HepG2 (cell line): ENCODE measurements at regions of chr16 and their contacts with region 1.

Region 1: DNA sequence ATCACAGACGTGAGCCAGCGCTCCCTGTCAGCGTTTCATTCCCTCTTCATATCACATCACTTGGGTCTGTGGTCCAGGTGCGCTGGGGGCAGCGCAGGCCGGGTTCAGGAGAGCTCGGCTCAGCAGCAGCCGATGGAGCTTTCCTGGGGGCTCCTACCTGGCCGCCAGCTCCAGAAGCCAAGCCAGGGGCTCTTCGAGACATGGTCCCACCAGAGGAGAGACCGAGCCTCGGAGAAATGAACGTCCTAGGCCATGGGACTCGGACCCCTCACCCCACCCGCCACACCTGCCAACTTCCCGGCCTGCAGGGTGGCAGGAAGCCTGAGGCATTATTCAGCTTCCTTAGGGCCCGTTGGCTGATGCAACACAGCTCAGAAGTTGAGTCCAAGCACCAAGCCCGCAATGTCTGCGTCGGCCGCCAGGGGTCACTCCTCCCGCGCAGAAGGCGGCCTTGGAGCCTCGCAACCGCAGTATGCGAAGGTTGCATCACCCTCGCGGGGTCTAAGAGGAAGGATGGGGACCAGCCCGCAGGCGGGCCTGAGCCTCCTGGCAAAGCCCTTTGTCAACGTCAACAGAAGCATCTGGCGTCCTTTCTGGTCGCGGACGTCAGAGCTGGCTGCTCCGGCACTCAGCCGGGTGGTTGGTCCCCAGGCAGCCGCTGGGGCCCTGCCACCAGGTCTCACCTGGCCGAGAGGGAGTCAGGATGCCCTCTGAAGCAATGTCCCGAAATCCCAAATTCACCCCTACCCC is 13.2 kb upstream of the KLHDC4 start:
- DNase-seq: peak; percentile 88
- ATAC-seq: peak; percentile 82
- H3K4me3 ChIP-seq: no peak overlapping the region
- H3K27ac ChIP-seq: peak overlapping the region; percentile 63
- H3K4me1 ChIP-seq: peaks cover 44% of the 10 kb centered on the region
- H3K27me3 ChIP-seq: no peaks in the 10 kb centered on the region
- CTCF ChIP-seq: peak; percentile 100
- EP300 ChIP-seq: peak; percentile 77 to 84
- POLR2A ChIP-seq: peak in 1 of 2 experiments; percentile 21; a peak in 1 of 4 replicates
- RAD21 ChIP-seq: peak; percentile 100

Region 2: GRCh38 chr16:87698241-87698640 is 80.8 kb before region 1 on chr16:
- CTCF ChIA-PET with region 1: no interaction called
- POLR2A ChIA-PET with region 1: no interaction called
- in situ Hi-C with region 1: no loop called
- intact Hi-C with region 1: no loop called
- DNase-seq: no peak
- ATAC-seq: no peak
- H3K4me3 ChIP-seq: no peak overlapping the region
- H3K27ac ChIP-seq: no peak overlapping the region
- H3K4me1 ChIP-seq: no peaks in the 10 kb centered on the region
- H3K27me3 ChIP-seq: no peaks in the 10 kb centered on the region; a peak in 1 of 5 replicates
- CTCF ChIP-seq: no peak
- EP300 ChIP-seq: no peak
- POLR2A ChIP-seq: no peak
- RAD21 ChIP-seq: no peak

Region 3: DNA sequence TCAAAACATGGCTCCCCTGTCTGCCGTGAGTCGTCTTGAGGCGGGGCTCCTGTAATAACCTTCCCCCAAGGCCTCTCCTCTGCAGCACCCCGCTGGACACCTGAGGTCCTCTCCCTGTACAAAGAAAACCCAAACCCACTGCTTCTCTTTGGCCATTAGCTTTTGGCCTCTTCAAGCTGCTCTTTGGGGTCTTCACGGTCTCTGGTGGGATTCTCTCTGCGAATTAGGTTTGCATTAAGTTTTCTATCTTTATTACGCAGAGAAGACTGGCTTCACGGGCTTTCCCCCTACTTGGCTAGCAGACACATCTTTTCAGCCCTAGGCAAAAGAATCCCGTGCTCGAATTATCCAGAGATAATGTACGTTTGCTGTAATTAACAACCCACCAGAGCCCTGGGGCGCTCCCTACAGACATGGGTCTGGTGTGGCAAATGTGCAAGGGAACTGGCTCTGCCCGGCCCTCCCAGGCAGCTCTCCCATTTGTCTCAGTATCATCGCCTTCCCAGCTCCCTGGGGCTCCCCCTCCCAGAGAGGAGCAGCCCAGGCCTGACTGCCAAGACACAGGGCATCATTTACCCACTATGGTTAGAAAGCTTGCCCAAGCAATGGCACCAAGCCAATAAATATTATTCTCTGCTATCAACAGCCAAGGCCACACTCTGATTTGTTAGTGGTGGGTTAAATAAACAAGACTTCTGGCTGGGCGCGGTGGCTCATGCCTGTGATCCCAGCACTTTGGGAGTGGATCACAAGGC is 11.4 kb after region 1 on chr16:
- CTCF ChIA-PET with region 1: interaction called, 3 read pairs
- POLR2A ChIA-PET with region 1: interaction called, 63 read pairs
- in situ Hi-C with region 1: no loop called
- intact Hi-C with region 1: no loop called
- DNase-seq: no peak
- ATAC-seq: peak; percentile 8; the same call in 2 of the 3 replicates
- H3K4me3 ChIP-seq: peak overlapping the region in 1 of 3 experiments; percentile 64; a peak in 2 of 6 replicates
- H3K27ac ChIP-seq: peak overlapping the region; percentile 88
- H3K4me1 ChIP-seq: peaks cover 77% of the 10 kb centered on the region
- H3K27me3 ChIP-seq: no peaks in the 10 kb centered on the region
- CTCF ChIP-seq: no peak
- EP300 ChIP-seq: no peak
- POLR2A ChIP-seq: no peak
- RAD21 ChIP-seq: no peak

Region 4: DNA sequence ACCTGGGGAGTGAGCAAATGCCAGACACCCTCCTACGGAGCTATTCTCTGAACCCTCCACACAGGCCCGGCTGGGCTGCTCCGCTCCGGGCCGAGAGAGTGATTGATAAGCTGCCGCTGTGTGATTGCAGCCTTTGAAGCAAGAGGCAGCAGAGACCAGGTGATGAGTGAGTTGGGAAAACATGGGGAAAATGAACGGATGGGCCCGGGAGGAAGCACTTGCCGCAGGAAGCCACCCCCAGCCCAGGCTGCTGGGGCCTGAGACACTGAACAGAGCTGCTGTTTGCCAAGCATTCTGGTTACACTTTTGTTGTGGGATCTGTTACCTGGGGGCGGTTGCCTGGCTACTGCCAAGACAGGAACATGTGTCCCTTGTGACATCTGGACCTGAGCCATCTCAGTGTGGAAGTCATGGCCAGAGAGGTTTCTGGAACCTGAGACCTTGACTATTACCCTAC is 33.2 kb after region 1 on chr16:
- CTCF ChIA-PET with region 1: interaction called, 3 read pairs
- POLR2A ChIA-PET with region 1: interaction called, 53 read pairs
- in situ Hi-C with region 1: no loop called
- intact Hi-C with region 1: loop called (anchors 2 kb)
- DNase-seq: peak; percentile 68
- ATAC-seq: peak; percentile 70
- H3K4me3 ChIP-seq: peak overlapping the region in 1 of 3 experiments; percentile 41; a peak in 1 of 6 replicates
- H3K27ac ChIP-seq: no peak overlapping the region
- H3K4me1 ChIP-seq: peaks cover 72% of the 10 kb centered on the region
- H3K27me3 ChIP-seq: no peaks in the 10 kb centered on the region
- CTCF ChIP-seq: peak; percentile 68
- EP300 ChIP-seq: no peak
- POLR2A ChIP-seq: no peak
- RAD21 ChIP-seq: peak; percentile 73

Region 5: GRCh38 chr16:87847785-87848675 is 69.0 kb after region 1 on chr16:
- CTCF ChIA-PET with region 1: interaction called, 38 read pairs
- POLR2A ChIA-PET with region 1: interaction called, 44 read pairs
- in situ Hi-C with region 1: loop called (anchors 5 kb)
- intact Hi-C with region 1: loop called (anchors 2 kb)
- DNase-seq: peak; percentile 99
- ATAC-seq: peak; percentile 85
- H3K4me3 ChIP-seq: peak overlapping the region in 2 of 3 experiments; percentile 2 to 64; a peak in 2 of 6 replicates
- H3K27ac ChIP-seq: peak overlapping the region; percentile 98
- H3K4me1 ChIP-seq: peaks cover 99% of the 10 kb centered on the region
- H3K27me3 ChIP-seq: no peaks in the 10 kb centered on the region
- CTCF ChIP-seq: peak; percentile 65
- EP300 ChIP-seq: peak; percentile 86 to 89
- POLR2A ChIP-seq: peak in 1 of 2 experiments; percentile 74; a peak in 2 of 4 replicates
- RAD21 ChIP-seq: peak; percentile 64

Region 6: DNA sequence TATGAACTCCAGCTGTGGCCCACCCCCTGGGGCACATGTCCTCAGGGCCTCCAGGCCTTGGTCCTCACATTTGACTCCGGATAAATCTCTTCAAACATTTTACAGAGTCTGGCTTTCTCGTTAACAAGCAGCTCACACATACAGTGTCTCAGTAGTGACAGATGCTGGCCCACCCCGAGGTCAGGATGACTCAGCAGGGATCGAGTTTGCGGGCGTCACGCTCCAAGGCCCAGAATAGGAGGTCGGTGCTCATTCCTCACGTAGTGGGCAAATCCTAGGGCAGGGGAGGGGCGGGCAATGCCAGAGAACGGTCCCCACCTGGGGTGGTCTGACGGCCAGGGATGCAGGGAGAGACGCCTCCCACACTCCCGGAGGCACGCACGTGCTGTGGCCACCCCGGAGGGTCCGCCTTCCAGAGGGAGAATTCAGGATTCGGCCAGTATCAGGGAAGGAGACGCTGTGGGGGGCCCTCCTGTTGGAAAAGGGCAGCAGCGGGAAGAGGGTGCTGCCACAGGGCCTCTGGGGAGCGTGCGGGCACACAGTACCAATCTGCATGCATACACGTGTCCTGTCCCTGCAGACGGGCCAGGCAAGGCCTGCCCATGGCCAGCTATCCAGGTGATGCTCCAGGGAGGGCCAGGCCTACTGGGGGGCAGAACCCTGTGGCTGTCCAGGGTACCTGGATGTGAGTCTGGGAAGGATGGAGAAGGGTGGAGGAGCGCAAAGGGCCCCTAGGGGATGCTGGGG is 81.7 kb after region 1 on chr16:
- CTCF ChIA-PET with region 1: interaction called, 3 read pairs
- POLR2A ChIA-PET with region 1: interaction called, 11 read pairs
- in situ Hi-C with region 1: no loop called
- intact Hi-C with region 1: no loop called
- DNase-seq: peak; percentile 84
- ATAC-seq: peak; percentile 9
- H3K4me3 ChIP-seq: peak overlapping the region; percentile 6 to 66 (median 49); a peak in 5 of 6 replicates
- H3K27ac ChIP-seq: peak overlapping the region; percentile 98
- H3K4me1 ChIP-seq: peaks cover 97% of the 10 kb centered on the region
- H3K27me3 ChIP-seq: no peaks in the 10 kb centered on the region
- CTCF ChIP-seq: no peak
- EP300 ChIP-seq: peak in 1 of 2 experiments; percentile 40; a peak in 1 of 4 replicates
- POLR2A ChIP-seq: peak in 1 of 2 experiments; percentile 43; a peak in 3 of 4 replicates
- RAD21 ChIP-seq: 0 out of 2 replicates have a peak, but pooled peaks have one; percentile 7

Region 7: DNA sequence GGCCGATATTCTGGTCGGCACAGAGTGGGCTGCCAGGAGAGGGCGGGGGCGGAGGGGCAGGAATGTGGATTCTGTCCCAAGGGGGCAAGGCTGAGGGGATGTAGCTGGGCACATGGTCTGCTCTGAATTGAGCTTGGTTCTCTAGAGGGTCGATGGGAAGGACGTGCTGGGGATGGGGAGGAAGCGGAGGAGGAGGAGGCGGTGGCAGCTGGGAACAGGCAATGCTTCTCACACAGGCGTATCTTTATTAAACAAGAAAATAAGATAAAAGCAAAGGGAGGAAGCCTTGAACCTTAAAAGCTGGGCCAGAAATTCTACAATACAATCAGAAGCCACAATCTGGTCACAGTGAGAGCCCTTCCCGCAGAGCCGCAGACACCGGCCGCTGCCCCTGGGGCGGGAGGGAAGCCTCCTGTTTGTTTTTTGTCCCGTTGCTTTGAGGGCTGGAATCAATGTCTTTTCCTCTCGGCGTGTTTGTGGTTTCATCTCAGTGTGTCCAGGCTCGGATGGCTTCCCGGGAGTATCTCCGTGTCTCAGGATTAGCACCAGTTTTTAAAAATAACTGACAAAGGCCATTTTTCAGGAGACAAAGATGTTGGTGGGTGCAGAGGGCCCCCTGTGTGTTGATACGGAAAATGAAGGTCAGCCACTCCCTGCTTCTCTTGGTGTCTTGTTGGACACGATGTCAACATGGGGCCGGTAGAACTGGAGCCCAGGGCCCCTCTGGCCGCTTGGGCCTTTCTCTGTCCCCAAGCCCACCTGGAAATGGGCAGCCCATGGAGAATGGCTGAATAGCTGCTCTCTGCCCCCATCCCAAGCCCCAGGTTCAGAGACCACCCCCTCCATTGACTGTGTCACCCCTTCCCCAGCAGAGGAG is 102.6 kb after region 1 on chr16:
- CTCF ChIA-PET with region 1: interaction called, 4 read pairs
- POLR2A ChIA-PET with region 1: interaction called, 10 read pairs
- in situ Hi-C with region 1: no loop called
- intact Hi-C with region 1: no loop called
- DNase-seq: no peak
- ATAC-seq: peak; percentile 34
- H3K4me3 ChIP-seq: peak overlapping the region; percentile 6 to 46 (median 39); a peak in 4 of 6 replicates
- H3K27ac ChIP-seq: peak overlapping the region; percentile 13
- H3K4me1 ChIP-seq: peaks cover 84% of the 10 kb centered on the region
- H3K27me3 ChIP-seq: no peaks in the 10 kb centered on the region
- CTCF ChIP-seq: peak; percentile 35; the same call in 1 of the 2 replicates
- EP300 ChIP-seq: no peak
- POLR2A ChIP-seq: no peak
- RAD21 ChIP-seq: no peak